ENCODE measurements at regions of chr5 and their contacts with region 1.

Region 1: DNA sequence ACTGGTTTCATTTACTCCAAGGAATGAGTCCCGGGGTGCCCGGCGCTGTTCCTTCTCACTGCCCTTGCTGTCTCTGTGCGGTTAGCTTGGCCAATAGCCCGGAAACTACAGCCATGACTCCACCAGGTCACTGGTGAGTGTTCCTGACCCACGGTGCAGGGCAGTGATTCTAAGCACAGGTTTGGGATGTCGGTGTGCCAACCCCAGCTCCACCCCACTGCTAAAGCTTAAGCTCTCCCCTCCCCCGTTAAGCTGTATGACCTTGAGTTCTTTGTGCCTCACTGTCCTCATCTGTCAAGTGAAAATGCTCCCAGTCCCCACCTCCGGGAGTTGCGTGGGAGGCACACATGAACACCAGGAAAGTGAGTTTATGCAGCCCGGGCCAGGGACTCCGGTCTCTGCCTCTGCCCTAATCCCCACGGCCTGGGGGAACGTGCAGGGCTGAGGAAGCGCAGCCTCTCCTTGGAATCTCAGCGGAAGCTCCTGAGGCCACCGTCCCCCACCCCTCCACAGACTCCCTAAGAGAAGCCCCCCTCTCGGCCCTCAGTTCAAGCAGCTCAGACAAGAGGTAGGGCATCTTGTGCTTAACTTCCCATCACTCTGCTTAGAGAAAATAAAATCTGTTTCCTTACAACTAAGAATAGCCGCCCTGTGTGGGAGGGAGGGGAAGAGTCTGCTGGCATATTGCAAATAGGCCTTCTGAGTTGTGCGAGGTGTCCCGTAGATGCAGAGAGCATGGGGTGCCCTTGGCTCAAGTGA is 92.0 kb upstream of the RAI14 start:
- DNase-seq: no peak
- H3K4me3 ChIP-seq: no peak overlapping the region
- H3K27ac ChIP-seq: no peak overlapping the region
- H3K4me1 ChIP-seq: peaks cover 0 to 10% (median 7%) of the 10 kb centered on the region in 4 experiments; a peak in 6 of 7 replicates
- H3K27me3 ChIP-seq: no peaks in the 10 kb centered on the region
- CTCF ChIP-seq: no peak
- EP300 ChIP-seq: no peak
- POLR2A ChIP-seq: no peak
- RAD21 ChIP-seq: no peak

Region 2: GRCh38 chr5:34576891-34577666 is 12.9 kb after region 1 on chr5:
- CTCF ChIA-PET with region 1: interaction called, 13 read pairs
- POLR2A ChIA-PET with region 1: no interaction called
- DNase-seq: no peak
- H3K4me3 ChIP-seq: no peak overlapping the region
- H3K27ac ChIP-seq: no peak overlapping the region
- H3K4me1 ChIP-seq: peaks cover 0 to 3% (median 0%) of the 10 kb centered on the region in 4 experiments; a peak in 3 of 7 replicates
- H3K27me3 ChIP-seq: no peaks in the 10 kb centered on the region; a peak in 1 of 7 replicates
- CTCF ChIP-seq: peak in 1 of 3 experiments; percentile 2; a peak in 1 of 4 replicates
- EP300 ChIP-seq: no peak
- POLR2A ChIP-seq: no peak
- RAD21 ChIP-seq: no peak

Measured in H1 (cell line).